Posterior vena cava (tissue), 2 donors: ENCODE measurements at regions of chr7 and their contacts with region 1.

Region 1: DNA sequence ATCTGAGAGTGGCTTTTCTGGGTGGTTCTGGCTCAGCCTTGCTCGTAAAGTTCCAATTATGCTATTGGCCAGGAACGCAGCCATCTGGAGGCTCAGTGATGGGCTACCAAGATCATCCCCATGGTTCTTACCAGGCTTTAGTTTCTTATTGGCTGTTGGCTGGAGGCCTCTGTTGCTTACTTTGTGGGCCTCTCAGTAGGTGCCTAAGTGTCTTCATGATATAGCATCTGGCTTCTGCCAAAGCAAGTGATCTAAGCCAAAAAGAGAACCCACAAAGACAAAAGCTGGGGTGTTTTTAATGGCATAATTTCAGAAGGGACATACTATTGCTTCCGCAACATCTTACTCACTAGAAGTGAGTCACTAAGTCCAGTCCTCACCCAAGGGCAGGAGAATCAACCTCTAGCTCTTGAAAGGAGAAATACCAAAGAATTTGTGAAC is 132.0 kb upstream of the MDFIC start:
- DNase-seq: no peak

Region 2: DNA sequence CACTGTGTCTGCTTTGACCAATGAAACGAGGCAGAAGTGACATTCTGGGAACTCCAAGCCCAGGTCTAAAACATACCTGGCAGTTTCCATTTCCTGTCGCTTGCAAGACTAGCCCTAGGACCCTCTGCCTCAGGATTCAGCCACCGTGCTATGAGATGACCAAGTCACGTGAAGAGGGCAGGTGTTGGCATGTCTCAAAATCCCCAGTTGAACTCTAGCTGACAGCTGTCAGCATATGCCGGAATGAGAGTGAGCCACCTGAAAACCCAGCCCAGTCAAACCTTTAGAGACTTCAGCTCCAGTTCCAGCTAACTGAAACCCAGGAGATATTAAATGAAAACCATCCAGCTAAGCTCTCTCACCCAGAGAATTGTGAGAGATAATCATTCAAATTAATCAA is 781.2 kb before region 1 on chr7:
- intact Hi-C with region 1: no loop called
- DNase-seq: no peak

Region 3: DNA sequence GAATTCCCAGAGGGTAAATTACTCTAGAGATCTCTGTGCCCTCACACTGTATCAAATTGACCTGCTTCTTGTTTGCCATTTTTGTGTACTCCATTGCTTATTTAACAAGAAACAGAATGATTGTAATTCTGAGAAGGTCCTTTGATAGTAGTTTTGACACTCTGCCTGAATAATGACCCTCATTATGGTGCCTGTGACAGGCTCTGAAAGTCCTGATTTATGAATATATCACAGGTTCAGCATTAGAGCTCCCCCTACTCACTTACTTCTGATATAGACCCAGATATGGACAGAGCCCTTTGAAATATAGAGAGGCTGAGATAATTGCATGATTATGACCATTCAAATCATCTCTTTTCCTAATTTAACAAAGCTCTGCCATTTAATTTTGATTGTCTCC is 597.2 kb after region 1 on chr7:
- intact Hi-C with region 1: loop called in 1 of 2 experiments (anchors 10 kb)
- DNase-seq: no peak